ENCODE measurements at regions of chr12 and their contacts with region 1.

Region 1: GRCh38 chr12:27367078-27367477 is 34.4 kb downstream of the BMAL2 start:
- DNase-seq: no peak
- H3K4me3 ChIP-seq: no peak overlapping the region
- H3K27ac ChIP-seq: no peak overlapping the region
- H3K4me1 ChIP-seq: no peaks in the 10 kb centered on the region
- H3K27me3 ChIP-seq: no peaks in the 10 kb centered on the region
- CTCF ChIP-seq: no peak
- POLR2A ChIP-seq: no peak

Region 2: GRCh38 chr12:27319409-27319808 is 47.7 kb before region 1 on chr12:
- intact Hi-C with region 1: loop called (anchors 2 kb)
- DNase-seq: no peak
- H3K4me3 ChIP-seq: no peak overlapping the region
- H3K27ac ChIP-seq: no peak overlapping the region
- H3K4me1 ChIP-seq: no peaks in the 10 kb centered on the region
- H3K27me3 ChIP-seq: no peaks in the 10 kb centered on the region
- CTCF ChIP-seq: no peak
- POLR2A ChIP-seq: no peak